Prostate gland (tissue), 2 donors: ENCODE measurements at regions of chrX and their contacts with region 1.

Region 1: GRCh38 chrX:31658360-31658759 is 586.5 kb upstream of the FTHL17 start:
- DNase-seq: no peak
- H3K4me3 ChIP-seq: no peak overlapping the region
- H3K27ac ChIP-seq: no peak overlapping the region
- H3K4me1 ChIP-seq: no peaks in the 10 kb centered on the region
- H3K27me3 ChIP-seq: no peaks in the 10 kb centered on the region
- CTCF ChIP-seq: peak in 3 of 4 experiments; percentile 40 to 57 (median 43)
- POLR2A ChIP-seq: no peak

Region 2: DNA sequence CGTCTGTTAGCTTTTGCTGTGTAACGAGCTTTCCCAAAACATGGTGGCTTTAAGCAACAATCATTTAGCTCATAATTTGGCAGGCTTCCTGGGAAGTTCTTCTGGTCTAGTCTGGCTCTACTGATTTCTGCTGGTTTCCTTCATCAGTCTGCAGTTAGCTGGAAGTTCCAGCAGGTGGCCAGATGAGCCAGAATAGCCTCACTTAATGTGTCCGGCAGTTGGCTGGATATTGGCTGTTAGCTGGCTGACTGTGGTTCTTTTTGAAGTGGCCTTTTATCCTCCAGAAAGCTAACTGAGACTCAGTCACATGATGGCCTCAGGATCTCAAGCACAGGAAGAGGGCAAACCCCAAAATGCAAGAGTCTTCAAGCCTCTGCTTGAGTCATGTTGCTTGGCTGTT is 621.5 kb before region 1 on chrX:
- intact Hi-C with region 1: loop called (anchors 5 kb)
- DNase-seq: peak; percentile 3
- H3K4me3 ChIP-seq: no peak overlapping the region
- H3K27ac ChIP-seq: no peak overlapping the region
- H3K4me1 ChIP-seq: no peaks in the 10 kb centered on the region
- H3K27me3 ChIP-seq: no peaks in the 10 kb centered on the region
- CTCF ChIP-seq: peak in 2 of 4 experiments; percentile 44 to 52
- POLR2A ChIP-seq: no peak

Region 3: DNA sequence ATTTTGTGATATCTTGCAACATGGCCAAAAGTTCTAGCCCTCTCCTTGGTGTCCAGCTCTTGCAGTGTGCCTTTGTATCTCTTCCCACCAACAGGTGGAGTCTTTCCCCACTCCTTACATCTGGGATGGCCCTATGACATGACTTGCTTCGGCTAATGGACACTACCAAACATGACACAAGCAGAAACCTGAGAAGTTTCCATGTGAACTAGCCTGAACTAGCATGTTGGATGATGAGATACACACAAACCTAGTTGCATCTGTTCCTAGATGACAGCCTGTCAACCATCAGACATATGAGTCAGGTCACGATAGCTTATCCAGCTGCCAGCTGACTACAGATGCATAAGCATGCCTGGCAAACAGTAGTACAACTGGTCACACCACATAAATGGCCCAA is 379.0 kb before region 1 on chrX:
- intact Hi-C with region 1: loop called (anchors 10 kb)
- DNase-seq: no peak
- H3K4me3 ChIP-seq: no peak overlapping the region
- H3K27ac ChIP-seq: no peak overlapping the region
- H3K4me1 ChIP-seq: no peaks in the 10 kb centered on the region
- H3K27me3 ChIP-seq: no peaks in the 10 kb centered on the region
- CTCF ChIP-seq: peak in 1 of 4 experiments; percentile 23
- POLR2A ChIP-seq: no peak

Region 4: GRCh38 chrX:31521941-31522340 is 136.4 kb before region 1 on chrX:
- intact Hi-C with region 1: no loop called
- DNase-seq: no peak
- H3K4me3 ChIP-seq: no peak overlapping the region
- H3K27ac ChIP-seq: no peak overlapping the region
- H3K4me1 ChIP-seq: no peaks in the 10 kb centered on the region
- H3K27me3 ChIP-seq: no peaks in the 10 kb centered on the region
- CTCF ChIP-seq: no peak
- POLR2A ChIP-seq: no peak